IMR-90 (cell line): ENCODE measurements at regions of chr7 and their contacts with region 1.

Region 1: GRCh38 chr7:116859323-116859722 is 3.1 kb upstream of the CAPZA2 start:
- DNase-seq: peak; percentile 87
- ATAC-seq: no peak
- H3K4me3 ChIP-seq: no peak overlapping the region
- H3K27ac ChIP-seq: no peak overlapping the region
- H3K4me1 ChIP-seq: peaks cover 5% of the 10 kb centered on the region
- H3K27me3 ChIP-seq: no peaks in the 10 kb centered on the region
- CTCF ChIP-seq: no peak
- POLR2A ChIP-seq: no peak
- RAD21 ChIP-seq: no peak

Region 2: GRCh38 chr7:116824449-116824848 is 34.9 kb before region 1 on chr7:
- CTCF ChIA-PET with region 1: no interaction called
- POLR2A ChIA-PET with region 1: no interaction called
- dilution Hi-C with region 1: no loop called
- in situ Hi-C with region 1: no loop called
- intact Hi-C with region 1: loop called (anchors 5 kb)
- DNase-seq: no peak
- ATAC-seq: no peak
- H3K4me3 ChIP-seq: no peak overlapping the region
- H3K27ac ChIP-seq: no peak overlapping the region
- H3K4me1 ChIP-seq: no peaks in the 10 kb centered on the region
- H3K27me3 ChIP-seq: peaks cover 6% of the 10 kb centered on the region
- CTCF ChIP-seq: no peak
- POLR2A ChIP-seq: no peak
- RAD21 ChIP-seq: no peak